Activated CD8-positive, alpha-beta T cell treated with anti-CD3 and anti-CD28 coated beads, Interleukin-2, amount 10 ng/mL, durations not matched to agents 7 days and 5 days (primary cell): ENCODE measurements at regions of chr10 and their contacts with region 1.

Region 1: DNA sequence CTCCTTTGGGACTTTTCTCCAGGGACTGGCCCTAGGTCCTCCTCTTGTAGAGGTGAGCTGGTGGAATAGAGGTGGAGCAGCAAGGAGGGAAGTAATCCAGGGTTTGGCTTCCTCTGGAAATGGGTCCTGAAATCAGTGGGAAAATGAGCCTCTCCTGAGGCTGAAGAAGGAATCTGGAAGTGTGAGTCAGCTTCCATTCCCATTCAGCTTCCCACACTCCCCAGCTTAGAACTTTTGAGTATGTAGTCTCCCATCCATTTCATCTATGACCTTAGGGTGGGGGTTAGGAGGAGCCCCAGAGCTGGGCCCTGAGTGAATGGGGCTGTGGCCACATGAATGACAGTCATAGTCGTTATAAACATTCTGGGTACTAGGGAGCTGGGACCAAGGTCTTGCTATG is 17.7 kb downstream of the LDB1 start:
- DNase-seq: no peak
- ATAC-seq: no peak
- H3K4me3 Mint-ChIP-seq: no peak overlapping the region
- H3K27ac Mint-ChIP-seq: no peak overlapping the region
- H3K4me1 Mint-ChIP-seq: peaks cover 27% of the 10 kb centered on the region
- H3K27me3 Mint-ChIP-seq: no peaks in the 10 kb centered on the region

Region 2: DNA sequence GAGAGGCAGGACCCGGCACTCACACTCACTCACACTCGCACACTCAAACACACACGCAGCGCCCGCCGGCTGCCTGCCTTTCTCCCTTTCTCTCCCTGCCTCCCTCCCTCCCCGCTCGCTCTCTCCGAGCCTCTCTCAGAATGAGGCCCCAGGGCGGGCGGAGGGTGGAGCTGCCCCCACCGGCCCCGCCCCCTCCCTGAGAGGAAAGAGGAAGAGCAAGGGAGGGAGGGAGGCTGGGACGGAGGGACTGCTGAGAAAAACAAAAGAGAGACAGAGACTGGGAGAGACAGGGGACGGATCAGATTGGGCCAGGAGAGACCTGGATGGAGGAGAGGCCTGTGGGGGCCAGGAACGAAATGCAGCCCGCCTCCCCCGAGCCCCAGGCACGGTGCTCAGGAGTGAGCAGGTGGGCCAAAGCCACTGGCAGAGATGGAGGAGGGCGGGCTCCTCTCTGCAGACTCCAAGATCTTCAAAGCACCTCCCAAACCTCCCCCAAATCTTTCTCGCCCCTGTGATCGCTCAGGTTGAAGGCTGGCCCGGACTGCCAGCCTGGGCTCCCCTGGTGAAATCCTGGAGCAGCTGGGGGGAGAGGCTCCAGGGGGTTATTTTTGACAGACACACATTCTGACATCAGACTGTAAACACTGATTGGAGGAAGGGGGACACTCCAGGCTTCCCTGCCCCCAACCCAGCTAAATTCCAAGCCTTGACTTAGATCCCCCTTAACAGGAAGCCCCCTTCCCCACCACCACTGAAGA is 12.6 kb after region 1 on chr10:
- CTCF ChIA-PET with region 1: interaction called, 16 read pairs
- POLR2A ChIA-PET with region 1: no interaction called
- DNase-seq: peak; percentile 91
- ATAC-seq: peak; percentile 75
- H3K4me3 Mint-ChIP-seq: peak overlapping the region; percentile 91
- H3K27ac Mint-ChIP-seq: peak overlapping the region; percentile 93
- H3K4me1 Mint-ChIP-seq: peaks cover 63% of the 10 kb centered on the region
- H3K27me3 Mint-ChIP-seq: no peaks in the 10 kb centered on the region